Activated CD4-positive, alpha-beta T cell treated with anti-CD3 and anti-CD28 coated beads for 36 hours (primary cell): ENCODE measurements at regions of chr11 and their contacts with region 1.

Region 1: DNA sequence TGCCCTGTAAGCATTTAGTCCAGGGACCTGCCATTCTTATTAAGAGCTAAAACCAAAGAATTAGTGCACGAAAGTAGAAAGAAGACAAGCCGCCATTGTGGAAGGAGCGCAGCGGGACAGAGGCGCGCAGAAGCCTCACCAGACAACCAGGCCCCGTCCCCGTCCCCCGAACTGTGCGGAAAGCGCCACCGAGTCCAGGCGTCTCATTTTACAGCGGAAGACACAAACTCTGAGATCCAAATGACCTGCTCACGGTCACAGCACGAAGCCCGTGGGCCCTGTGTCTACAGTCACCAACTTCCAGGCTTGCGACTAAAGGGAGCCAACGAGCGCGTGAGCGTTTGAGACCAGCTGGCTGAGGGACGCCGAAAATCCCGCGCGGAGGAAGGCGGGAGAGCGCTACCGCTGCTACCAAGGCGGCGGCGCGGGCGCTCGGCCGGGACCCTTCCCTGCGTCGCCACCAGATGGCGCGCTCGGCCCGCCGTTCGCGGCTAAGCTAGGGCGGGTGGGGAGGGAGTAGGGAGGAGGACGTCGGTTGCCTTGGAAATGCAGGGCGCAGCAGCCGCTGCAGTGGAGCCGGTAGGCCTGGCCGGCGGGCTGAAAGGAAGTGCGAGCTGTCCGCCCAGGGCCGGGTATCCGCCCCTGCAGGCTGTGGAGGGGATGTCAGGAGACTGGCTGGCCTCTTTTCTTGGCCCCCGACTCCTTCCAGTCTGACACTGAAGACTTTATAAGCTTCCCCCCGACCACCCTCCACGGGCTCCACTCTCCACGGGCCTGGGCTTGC is 434 bp upstream of the CCDC83 start:
- DNase-seq: peak; percentile 94
- ATAC-seq: peak; percentile 93
- H3K4me3 Mint-ChIP-seq: peak overlapping the region; percentile 77
- H3K27ac Mint-ChIP-seq: peak overlapping the region; percentile 94
- H3K4me1 Mint-ChIP-seq: peaks cover 2% of the 10 kb centered on the region
- H3K27me3 Mint-ChIP-seq: no peaks in the 10 kb centered on the region

Region 2: DNA sequence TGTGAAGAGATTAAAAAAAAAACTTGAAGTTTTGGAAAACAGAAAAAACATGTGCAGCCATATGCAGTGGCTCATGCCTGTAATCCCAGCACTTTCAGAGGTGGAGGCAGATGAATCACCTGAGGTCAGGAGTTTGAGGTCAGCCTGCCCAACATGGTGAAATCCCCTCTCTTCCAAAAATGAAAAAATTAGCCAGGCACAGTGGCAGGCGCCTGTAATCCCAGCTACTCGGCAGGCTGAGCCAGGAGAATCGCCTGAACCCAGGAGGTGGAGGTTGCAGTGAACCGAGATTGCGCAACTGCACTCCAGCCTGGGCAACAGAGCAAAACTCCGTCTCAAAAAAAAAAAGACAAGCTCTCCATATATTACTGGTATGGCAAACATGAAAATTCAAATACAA is 235.3 kb before region 1 on chr11:
- CTCF ChIA-PET with region 1: no interaction called
- POLR2A ChIA-PET with region 1: no interaction called
- intact Hi-C with region 1: no loop called
- DNase-seq: peak; percentile 30
- ATAC-seq: no peak
- H3K4me3 Mint-ChIP-seq: no peak overlapping the region
- H3K27ac Mint-ChIP-seq: no peak overlapping the region
- H3K4me1 Mint-ChIP-seq: peaks cover 11% of the 10 kb centered on the region
- H3K27me3 Mint-ChIP-seq: peaks cover 3% of the 10 kb centered on the region

Region 3: DNA sequence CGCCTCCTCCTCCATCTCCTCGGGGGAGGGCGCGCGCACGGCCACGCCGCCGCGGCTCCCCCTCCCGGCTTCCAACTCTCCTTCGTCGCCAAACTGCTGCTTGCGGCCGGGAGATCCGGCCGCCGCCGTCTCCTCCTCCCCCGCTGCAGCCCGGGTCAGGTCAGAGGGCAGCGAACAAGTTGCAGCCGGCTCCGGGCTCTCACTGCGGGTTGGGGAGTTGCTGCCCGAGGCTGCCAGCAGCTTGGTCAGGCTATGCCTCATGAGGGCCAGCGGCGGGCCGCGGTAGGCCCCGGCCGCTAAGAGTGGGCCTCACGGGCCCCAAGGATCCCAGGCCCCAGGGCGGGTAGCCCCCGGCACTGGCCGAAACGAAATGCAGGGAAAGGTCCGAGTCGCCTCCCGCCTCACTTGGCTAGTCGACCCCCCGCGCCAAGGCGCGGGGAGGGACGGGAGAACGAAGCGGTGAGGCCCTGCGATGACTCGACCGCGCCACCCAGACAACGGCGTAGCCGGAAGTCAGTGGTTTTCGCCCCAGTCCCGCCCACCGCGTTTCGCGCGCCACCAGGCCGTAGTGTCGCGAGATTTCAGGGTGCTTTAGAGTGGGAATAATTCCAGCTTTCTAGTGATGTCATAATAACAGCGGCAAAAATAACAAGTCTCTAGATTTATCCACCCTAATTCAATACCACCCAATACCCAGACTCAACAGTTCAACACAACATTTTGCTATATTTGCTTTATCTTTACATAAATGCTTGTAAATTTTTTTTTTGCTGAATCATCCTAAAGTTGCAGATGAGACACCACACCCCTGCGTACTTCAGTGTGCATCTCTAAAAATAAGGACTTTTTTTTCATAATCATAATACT is 189.9 kb before region 1 on chr11 and contains the start of gene CREBZF:
- CTCF ChIA-PET with region 1: interaction called, 5 read pairs
- POLR2A ChIA-PET with region 1: no interaction called
- intact Hi-C with region 1: loop called (anchors 1 kb)
- DNase-seq: peak; percentile 97
- ATAC-seq: peak; percentile 88
- H3K4me3 Mint-ChIP-seq: peak within 1 kb of the TSS; percentile 100
- H3K27ac Mint-ChIP-seq: peak within 1 kb of the TSS; percentile 99
- H3K4me1 Mint-ChIP-seq: peaks cover 29% of the 10 kb centered on the region
- H3K27me3 Mint-ChIP-seq: no peaks in the 10 kb centered on the region
- total RNA-seq, gene CREBZF: 30.4 to 35.9 TPM

Region 4: GRCh38 chr11:85821636-85822035 is 33.1 kb before region 1 on chr11:
- CTCF ChIA-PET with region 1: no interaction called
- POLR2A ChIA-PET with region 1: no interaction called
- intact Hi-C with region 1: no loop called
- DNase-seq: peak; percentile 39
- ATAC-seq: peak; percentile 43
- H3K4me3 Mint-ChIP-seq: no peak overlapping the region
- H3K27ac Mint-ChIP-seq: no peak overlapping the region
- H3K4me1 Mint-ChIP-seq: peaks cover 50% of the 10 kb centered on the region
- H3K27me3 Mint-ChIP-seq: no peaks in the 10 kb centered on the region

Region 5: GRCh38 chr11:85941380-85941973 is 86.7 kb after region 1 on chr11:
- CTCF ChIA-PET with region 1: no interaction called
- POLR2A ChIA-PET with region 1: no interaction called
- intact Hi-C with region 1: loop called in 1 of 2 experiments (anchors 2 kb)
- DNase-seq: peak; percentile 73
- ATAC-seq: peak; percentile 72
- H3K4me3 Mint-ChIP-seq: no peak overlapping the region
- H3K27ac Mint-ChIP-seq: no peak overlapping the region
- H3K4me1 Mint-ChIP-seq: peaks cover 18% of the 10 kb centered on the region
- H3K27me3 Mint-ChIP-seq: no peaks in the 10 kb centered on the region

Region 6: GRCh38 chr11:86218125-86219084 is 363.7 kb after region 1 on chr11:
- CTCF ChIA-PET with region 1: no interaction called
- POLR2A ChIA-PET with region 1: no interaction called
- intact Hi-C with region 1: loop called in 1 of 2 experiments (anchors 5 kb)
- DNase-seq: peak; percentile 79
- ATAC-seq: peak; percentile 40
- H3K4me3 Mint-ChIP-seq: peak overlapping the region; percentile 26
- H3K27ac Mint-ChIP-seq: peak overlapping the region; percentile 91
- H3K4me1 Mint-ChIP-seq: peaks cover 78% of the 10 kb centered on the region
- H3K27me3 Mint-ChIP-seq: no peaks in the 10 kb centered on the region

Region 7: GRCh38 chr11:86440305-86440716 is 585.6 kb after region 1 on chr11:
- CTCF ChIA-PET with region 1: no interaction called
- POLR2A ChIA-PET with region 1: no interaction called
- intact Hi-C with region 1: loop called in 1 of 2 experiments (anchors 10 kb)
- DNase-seq: no peak
- ATAC-seq: no peak
- H3K4me3 Mint-ChIP-seq: no peak overlapping the region
- H3K27ac Mint-ChIP-seq: no peak overlapping the region
- H3K4me1 Mint-ChIP-seq: peaks cover 25% of the 10 kb centered on the region
- H3K27me3 Mint-ChIP-seq: no peaks in the 10 kb centered on the region

Region 8: DNA sequence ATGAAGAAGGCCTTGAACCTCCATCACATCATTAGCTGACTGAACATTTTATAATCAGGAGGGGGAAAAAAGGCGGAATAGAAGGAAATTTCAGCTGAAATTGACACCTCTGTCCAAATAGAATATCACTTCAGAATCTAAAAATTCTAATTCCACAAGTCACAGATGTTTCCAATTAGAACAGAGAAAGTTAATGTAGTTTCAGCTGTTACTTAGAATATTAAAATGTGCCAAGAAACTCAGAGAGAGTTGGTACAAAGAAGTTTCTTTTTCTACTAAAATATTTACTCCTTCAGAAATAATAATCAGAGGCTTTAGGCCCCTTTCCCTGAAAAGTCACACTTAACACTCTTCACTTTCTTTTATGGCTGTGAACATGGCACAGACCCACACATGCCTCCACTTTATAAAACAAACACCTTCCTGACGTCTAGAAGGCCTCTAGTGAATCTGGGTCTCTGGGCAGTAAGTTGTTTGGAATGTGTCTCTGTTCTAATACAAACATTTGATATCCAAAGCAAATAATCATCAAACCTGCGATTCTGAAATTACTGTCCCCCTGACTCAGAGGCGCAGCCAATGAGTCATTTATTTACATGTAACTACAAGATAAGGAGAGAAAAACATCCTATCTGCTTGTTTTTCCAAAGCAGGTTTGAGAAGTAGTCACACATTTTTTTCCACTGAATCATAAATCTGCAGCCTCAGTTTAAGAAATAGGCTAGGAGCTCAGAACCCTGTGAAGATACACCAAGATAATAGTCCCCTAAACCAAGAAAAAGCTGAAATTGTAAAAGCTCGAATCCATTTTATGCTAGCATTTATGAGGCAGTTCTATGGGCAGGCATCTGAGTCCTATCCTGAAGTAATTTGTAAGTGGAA is 669.2 kb after region 1 on chr11:
- CTCF ChIA-PET with region 1: no interaction called
- POLR2A ChIA-PET with region 1: no interaction called
- intact Hi-C with region 1: no loop called
- DNase-seq: peak; percentile 30
- ATAC-seq: peak; percentile 69
- H3K4me3 Mint-ChIP-seq: no peak overlapping the region
- H3K27ac Mint-ChIP-seq: peak overlapping the region; percentile 53
- H3K4me1 Mint-ChIP-seq: peaks cover 16% of the 10 kb centered on the region
- H3K27me3 Mint-ChIP-seq: peaks cover 2% of the 10 kb centered on the region

Region 9: DNA sequence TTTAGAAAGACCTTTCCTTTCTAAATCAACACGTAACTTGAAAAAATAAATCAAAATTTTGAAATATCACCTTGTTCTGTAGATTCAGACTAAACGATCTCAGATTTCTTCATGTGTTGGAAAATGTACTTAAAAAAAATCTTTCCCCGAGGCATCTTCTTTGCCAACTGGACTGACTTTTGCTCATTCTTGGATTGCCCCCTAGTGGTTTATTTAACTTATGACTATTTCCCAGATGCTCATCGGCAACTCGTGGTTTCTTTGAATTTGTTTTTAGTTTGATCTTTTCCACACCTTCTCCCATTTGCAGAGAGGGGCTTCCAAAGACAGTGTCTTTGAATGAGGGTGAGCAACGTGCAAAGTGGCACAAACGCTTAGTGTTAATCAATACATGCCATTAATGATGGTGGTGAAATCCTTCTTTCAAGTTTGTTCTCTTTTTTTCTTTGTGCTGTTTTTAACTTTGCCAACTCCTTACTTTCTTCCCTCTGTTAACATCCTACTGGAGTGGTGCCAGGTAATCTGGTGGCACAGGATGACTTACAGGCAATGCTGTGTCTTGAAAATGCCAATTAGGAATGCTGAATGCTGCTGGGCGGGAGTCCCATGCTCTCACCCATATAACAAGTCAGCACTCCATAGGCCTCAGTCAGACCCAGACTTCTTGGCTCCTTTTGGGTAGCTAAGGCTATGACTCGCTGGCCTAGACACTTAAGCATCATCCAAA is 963.9 kb after region 1 on chr11:
- CTCF ChIA-PET with region 1: interaction called, 3 read pairs
- POLR2A ChIA-PET with region 1: no interaction called
- intact Hi-C with region 1: loop called (anchors 1 to 5 kb)
- DNase-seq: no peak
- ATAC-seq: no peak
- H3K4me3 Mint-ChIP-seq: no peak overlapping the region
- H3K27ac Mint-ChIP-seq: no peak overlapping the region
- H3K4me1 Mint-ChIP-seq: peaks cover 6% of the 10 kb centered on the region
- H3K27me3 Mint-ChIP-seq: peaks cover 27% of the 10 kb centered on the region

Region 10: GRCh38 chr11:86947541-86947940 is 1092.8 kb after region 1 on chr11:
- CTCF ChIA-PET with region 1: no interaction called
- POLR2A ChIA-PET with region 1: no interaction called
- intact Hi-C with region 1: no loop called
- DNase-seq: no peak
- ATAC-seq: no peak
- H3K4me3 Mint-ChIP-seq: no peak overlapping the region
- H3K27ac Mint-ChIP-seq: no peak overlapping the region
- H3K4me1 Mint-ChIP-seq: no peaks in the 10 kb centered on the region
- H3K27me3 Mint-ChIP-seq: peaks cover 11% of the 10 kb centered on the region